Dorsolateral prefrontal cortex (tissue), 120 donors: ENCODE measurements at regions of chr1 and their contacts with region 1.

Region 1: DNA sequence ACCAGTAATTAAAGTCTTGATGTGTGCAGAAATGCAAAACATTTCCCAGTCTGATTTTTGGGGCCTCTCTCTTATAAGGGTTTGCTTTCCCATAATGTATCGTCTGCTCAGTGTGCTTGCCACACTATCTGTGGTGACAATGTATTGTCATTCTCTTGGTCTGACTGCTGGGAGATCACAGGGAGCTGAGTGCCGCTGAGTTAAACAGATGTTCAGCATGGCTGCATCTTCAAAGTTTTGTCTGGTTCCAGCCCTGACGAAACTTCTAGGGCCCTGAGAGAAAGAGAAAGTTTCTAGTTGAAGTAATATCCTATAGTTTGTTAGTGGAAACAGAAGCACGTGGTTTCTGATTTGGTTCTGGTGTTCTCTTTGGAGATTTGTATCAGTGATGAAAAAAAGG is 42.6 kb downstream of the DNM3 start:
- DNase-seq: no peak
- H3K4me3 ChIP-seq: no peak overlapping the region
- H3K27ac ChIP-seq: peak overlapping the region in 22 of 59 donors; percentile 0 to 64 (median 40)
- H3K27me3 ChIP-seq: no peaks in the 10 kb centered on the region
- CTCF ChIP-seq: no peak

Region 2: DNA sequence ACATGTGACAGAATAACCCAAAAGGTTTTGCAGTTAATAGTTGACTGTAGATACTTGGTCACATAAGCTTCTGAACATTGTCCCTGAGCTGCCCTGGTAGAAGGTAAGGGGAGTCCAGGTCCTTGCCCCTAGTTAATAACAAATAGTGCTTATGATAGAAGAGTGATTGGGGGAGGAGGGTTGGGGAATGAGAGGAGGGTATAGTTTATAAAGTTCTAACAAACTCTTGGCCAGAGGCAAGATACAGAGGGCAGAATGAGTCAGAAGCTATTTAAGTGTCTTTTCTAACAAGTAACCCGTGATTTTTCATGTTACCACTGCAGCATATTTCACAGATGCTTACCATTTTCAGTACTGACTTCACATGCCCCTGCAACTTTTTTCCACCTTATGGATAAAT is 288.5 kb before region 1 on chr1:
- intact Hi-C with region 1: no loop called
- DNase-seq: no peak
- H3K4me3 ChIP-seq: no peak overlapping the region
- H3K27ac ChIP-seq: no peak overlapping the region
- H3K27me3 ChIP-seq: no peaks in the 10 kb centered on the region
- CTCF ChIP-seq: no peak

Region 3: DNA sequence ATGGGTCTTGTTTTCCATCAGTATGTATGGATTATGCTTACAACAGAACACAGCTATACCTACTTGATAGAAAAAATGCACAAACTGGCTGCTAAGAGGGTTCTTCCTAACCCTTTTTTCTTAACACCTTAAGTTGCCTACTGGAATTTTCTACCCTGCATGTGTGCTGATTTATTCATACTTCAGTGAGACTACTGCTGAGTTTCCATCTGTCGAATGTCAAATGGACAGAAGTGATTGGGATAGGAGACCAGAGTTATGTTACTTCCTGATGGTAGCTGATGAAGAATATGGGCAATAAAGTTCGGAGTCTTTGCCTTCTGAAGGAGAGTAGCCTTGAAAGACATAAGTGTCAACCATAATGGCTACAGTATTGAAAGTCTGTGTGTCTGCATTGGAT is 49.0 kb before region 1 on chr1:
- intact Hi-C with region 1: loop called in 1 of 2 experiments (anchors 5 kb)
- DNase-seq: peak in 1 of 10 donors; percentile 33
- H3K4me3 ChIP-seq: no peak overlapping the region
- H3K27ac ChIP-seq: peak overlapping the region in 1 of 59 donors; percentile 58
- H3K27me3 ChIP-seq: no peaks in the 10 kb centered on the region
- CTCF ChIP-seq: no peak

Region 4: DNA sequence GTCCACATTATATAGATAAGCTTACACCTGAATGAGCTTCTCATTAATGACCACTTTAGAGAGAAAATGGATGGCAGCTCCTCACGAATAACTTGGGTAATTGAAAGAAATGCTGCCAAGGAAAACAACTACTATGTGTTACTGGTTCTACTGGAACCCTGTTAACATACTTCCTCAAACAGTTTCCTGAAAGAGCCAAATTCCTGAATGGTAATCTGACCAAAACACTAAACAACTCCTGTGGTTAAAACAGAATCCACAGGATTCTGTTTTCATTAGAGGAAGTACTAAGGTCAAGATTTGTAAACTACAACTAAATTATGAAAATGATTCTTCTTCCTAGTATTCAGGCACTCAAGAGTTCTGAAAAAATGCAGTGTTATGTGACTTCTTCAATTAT is 64.7 kb after region 1 on chr1:
- intact Hi-C with region 1: no loop called
- DNase-seq: no peak
- H3K4me3 ChIP-seq: no peak overlapping the region
- H3K27ac ChIP-seq: peak overlapping the region in 1 of 59 donors; percentile 3
- H3K27me3 ChIP-seq: no peaks in the 10 kb centered on the region
- CTCF ChIP-seq: no peak